ENCODE measurements at regions of chr13 and their contacts with region 1.

Region 1: GRCh38 chr13:106567474-106568298 is at the start of gene ARGLU1:
- DNase-seq: peak; percentile 89
- H3K4me3 ChIP-seq: peak within 1 kb of the TSS; percentile 86 to 96 (median 91)
- H3K27ac ChIP-seq: peak within 1 kb of the TSS; percentile 94
- H3K4me1 ChIP-seq: peaks cover 35% of the 10 kb centered on the region
- H3K27me3 ChIP-seq: no peaks in the 10 kb centered on the region
- CTCF ChIP-seq: no peak
- total RNA-seq, gene ARGLU1: 37.8 to 84.0 TPM

Region 2: DNA sequence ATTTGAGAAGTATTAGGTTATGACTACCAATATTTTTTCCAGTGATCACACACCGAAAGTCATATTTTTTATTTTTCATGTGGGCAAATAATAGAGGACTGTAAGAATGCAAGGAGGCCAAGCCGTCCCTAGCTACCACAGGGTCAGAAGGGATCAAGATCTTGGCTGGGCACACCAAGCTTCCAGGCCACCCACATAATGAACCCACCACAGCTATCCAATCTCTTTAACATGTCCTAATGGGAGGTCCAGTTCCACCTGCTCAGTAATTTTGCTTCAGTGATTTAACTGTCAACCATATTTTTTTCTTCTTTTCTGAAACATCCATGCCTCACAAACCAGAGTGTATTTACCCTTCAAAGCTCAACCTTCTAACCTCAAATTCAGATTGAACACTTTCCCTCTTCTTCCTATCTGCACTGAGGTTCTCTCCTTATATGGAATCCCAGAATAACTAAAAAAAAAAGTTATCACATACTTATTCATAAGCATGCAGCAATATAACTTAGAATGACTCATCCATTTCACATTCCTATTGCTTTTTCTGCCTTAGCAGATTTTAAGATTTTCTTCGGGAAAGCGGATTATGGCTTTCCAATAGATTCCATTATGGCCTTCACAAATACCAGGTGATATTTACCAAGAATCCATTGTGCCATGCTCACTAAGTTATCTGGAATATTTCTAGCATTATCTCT is 11.9 kb before region 1 on chr13:
- CTCF ChIA-PET with region 1: no interaction called
- dilution Hi-C with region 1: no loop called
- in situ Hi-C with region 1: no loop called
- intact Hi-C with region 1: loop called (anchors 2 kb)
- DNase-seq: no peak
- H3K4me3 ChIP-seq: no peak overlapping the region
- H3K27ac ChIP-seq: no peak overlapping the region
- H3K4me1 ChIP-seq: no peaks in the 10 kb centered on the region
- H3K27me3 ChIP-seq: no peaks in the 10 kb centered on the region
- CTCF ChIP-seq: no peak

Region 3: DNA sequence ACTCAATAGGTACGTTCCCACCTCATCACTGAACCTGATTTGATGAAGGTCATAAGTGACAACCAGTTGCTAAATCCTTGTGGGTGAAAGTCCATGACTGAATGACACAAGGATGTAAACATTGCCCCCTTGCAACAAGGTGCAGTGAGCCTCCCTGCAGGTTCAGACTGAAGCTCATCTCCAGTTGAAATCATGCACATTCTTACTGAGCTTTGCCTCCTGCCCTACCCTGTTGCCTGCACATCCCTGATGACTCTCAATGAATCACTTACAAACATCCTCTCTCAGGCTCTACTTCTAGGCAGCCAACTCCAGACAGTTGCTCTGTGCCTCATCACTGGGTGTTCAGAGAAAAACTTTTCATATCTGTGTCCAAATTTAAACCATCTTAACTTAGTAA is 42.8 kb after region 1 on chr13:
- CTCF ChIA-PET with region 1: no interaction called
- dilution Hi-C with region 1: no loop called
- in situ Hi-C with region 1: loop called (anchors 10 kb)
- intact Hi-C with region 1: loop called (anchors 1 kb)
- DNase-seq: peak; percentile 80
- H3K4me3 ChIP-seq: no peak overlapping the region
- H3K27ac ChIP-seq: peak overlapping the region; percentile 50
- H3K4me1 ChIP-seq: peaks cover 23% of the 10 kb centered on the region
- H3K27me3 ChIP-seq: no peaks in the 10 kb centered on the region
- CTCF ChIP-seq: no peak

Region 4: GRCh38 chr13:106619688-106620555 is 52.2 kb after region 1 on chr13:
- CTCF ChIA-PET with region 1: interaction called, 3 read pairs
- dilution Hi-C with region 1: loop called (anchors 10 kb)
- in situ Hi-C with region 1: loop called (anchors 10 kb)
- intact Hi-C with region 1: loop called (anchors 1 kb)
- DNase-seq: peak; percentile 49
- H3K4me3 ChIP-seq: no peak overlapping the region
- H3K27ac ChIP-seq: no peak overlapping the region
- H3K4me1 ChIP-seq: no peaks in the 10 kb centered on the region
- H3K27me3 ChIP-seq: peaks cover 2% of the 10 kb centered on the region
- CTCF ChIP-seq: peak; percentile 82 to 89

Region 5: GRCh38 chr13:106709522-106709921 is 141.8 kb after region 1 on chr13:
- CTCF ChIA-PET with region 1: no interaction called
- dilution Hi-C with region 1: no loop called
- in situ Hi-C with region 1: no loop called
- intact Hi-C with region 1: no loop called
- DNase-seq: no peak
- H3K4me3 ChIP-seq: no peak overlapping the region
- H3K27ac ChIP-seq: no peak overlapping the region
- H3K4me1 ChIP-seq: no peaks in the 10 kb centered on the region
- H3K27me3 ChIP-seq: no peaks in the 10 kb centered on the region
- CTCF ChIP-seq: no peak

Region 6: DNA sequence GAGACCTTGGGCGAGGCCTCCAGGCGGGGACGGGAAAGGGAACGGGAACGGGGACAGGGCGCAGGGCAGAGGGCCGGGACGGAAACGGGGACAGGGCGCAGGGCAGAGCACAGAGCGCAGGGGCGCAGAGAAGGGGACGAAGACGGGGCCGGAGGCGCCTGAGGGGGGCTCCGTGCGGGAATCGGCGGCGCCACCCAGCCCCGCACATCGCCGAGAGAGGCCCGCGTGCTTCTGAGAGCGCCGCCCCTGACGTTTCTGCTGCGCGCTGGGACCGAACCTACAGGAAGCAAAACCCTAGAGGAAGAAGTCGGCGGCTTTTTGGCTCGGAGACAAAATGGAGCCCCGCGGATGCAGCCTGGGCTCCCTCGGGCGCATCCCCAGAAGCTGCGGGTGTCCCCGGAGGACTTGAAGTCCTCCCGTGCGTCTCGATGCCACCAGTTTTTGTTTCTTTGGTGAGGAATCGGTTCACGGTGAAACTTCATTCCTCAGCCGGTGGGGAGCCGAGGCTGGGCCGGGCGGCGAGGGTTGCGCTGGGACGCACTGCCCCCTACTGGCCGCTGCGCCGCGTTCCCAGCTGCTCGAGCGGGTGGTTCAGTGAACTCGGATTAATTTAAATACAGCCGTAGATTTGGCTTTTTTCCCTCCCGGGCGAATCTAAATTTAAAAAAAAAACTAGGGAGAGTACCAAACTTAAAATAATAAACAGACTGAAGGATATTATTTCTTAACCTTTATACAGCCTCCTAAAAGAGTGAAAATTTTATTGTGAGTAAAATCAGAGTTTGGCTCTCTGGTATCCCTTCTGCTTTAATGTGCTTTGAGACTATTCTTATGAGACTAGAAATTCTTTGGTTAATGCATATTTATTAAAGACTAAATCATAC is 350.2 kb after region 1 on chr13:
- CTCF ChIA-PET with region 1: no interaction called
- dilution Hi-C with region 1: no loop called
- in situ Hi-C with region 1: no loop called
- intact Hi-C with region 1: loop called (anchors 10 kb)
- DNase-seq: peak; percentile 59
- H3K4me3 ChIP-seq: peak overlapping the region; percentile 69 to 92 (median 71)
- H3K27ac ChIP-seq: peak overlapping the region; percentile 22
- H3K4me1 ChIP-seq: no peaks in the 10 kb centered on the region
- H3K27me3 ChIP-seq: no peaks in the 10 kb centered on the region
- CTCF ChIP-seq: peak; percentile 77 to 91

Measured in mammary epithelial cell (primary cell).